ENCODE measurements at regions of chr7 and their contacts with region 1.

Region 1: GRCh38 chr7:52168085-52168484 is 851.5 kb upstream of the COBL start:
- DNase-seq: no peak
- H3K4me3 ChIP-seq: no peak overlapping the region
- H3K27ac ChIP-seq: no peak overlapping the region
- H3K4me1 ChIP-seq: no peaks in the 10 kb centered on the region
- H3K27me3 ChIP-seq: no peaks in the 10 kb centered on the region
- CTCF ChIP-seq: no peak
- POLR2A ChIP-seq: no peak

Region 2: GRCh38 chr7:52652621-52653020 is 484.5 kb after region 1 on chr7:
- intact Hi-C with region 1: loop called (anchors 5 kb)
- DNase-seq: no peak
- H3K4me3 ChIP-seq: no peak overlapping the region
- H3K27ac ChIP-seq: no peak overlapping the region
- H3K4me1 ChIP-seq: no peaks in the 10 kb centered on the region
- H3K27me3 ChIP-seq: no peaks in the 10 kb centered on the region
- CTCF ChIP-seq: no peak
- POLR2A ChIP-seq: no peak